A673 (cell line): ENCODE measurements at regions of chr2 and their contacts with region 1.

Region 1: GRCh38 chr2:137050949-137051348 is 285.6 kb downstream of the THSD7B start:
- DNase-seq: no peak
- H3K4me3 ChIP-seq: no peak overlapping the region
- H3K27ac ChIP-seq: no peak overlapping the region
- H3K4me1 ChIP-seq: no peaks in the 10 kb centered on the region
- H3K27me3 ChIP-seq: no peaks in the 10 kb centered on the region
- CTCF ChIP-seq: 0 out of 2 replicates have a peak, but pooled peaks have one; percentile 13

Region 2: DNA sequence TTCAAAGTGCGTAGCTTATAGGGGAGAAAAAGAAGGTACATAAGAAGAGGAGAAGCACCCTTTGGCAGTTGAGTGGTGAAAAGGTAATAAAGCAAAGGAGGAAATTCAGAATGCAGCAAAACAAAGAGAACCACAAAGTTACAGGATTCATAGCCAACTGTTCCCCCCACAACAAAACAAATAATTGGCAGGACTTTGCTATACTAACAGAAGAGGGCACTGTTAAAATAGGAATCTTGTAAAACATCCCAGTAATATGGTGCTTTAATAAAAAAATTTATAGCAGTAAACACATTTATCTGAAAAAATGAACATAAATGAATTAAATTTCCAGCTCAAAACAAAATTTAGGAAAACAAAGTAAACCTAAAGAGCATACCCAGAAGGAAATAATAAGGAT is 1477.3 kb before region 1 on chr2:
- CTCF ChIA-PET with region 1: no interaction called
- POLR2A ChIA-PET with region 1: no interaction called
- intact Hi-C with region 1: no loop called
- DNase-seq: no peak
- H3K4me3 ChIP-seq: no peak overlapping the region
- H3K27ac ChIP-seq: no peak overlapping the region
- H3K4me1 ChIP-seq: no peaks in the 10 kb centered on the region
- H3K27me3 ChIP-seq: no peaks in the 10 kb centered on the region
- CTCF ChIP-seq: peak; percentile 33; the same call in 1 of the 2 replicates

Region 3: GRCh38 chr2:136874258-136874657 is 176.7 kb before region 1 on chr2:
- CTCF ChIA-PET with region 1: no interaction called
- POLR2A ChIA-PET with region 1: no interaction called
- intact Hi-C with region 1: loop called (anchors 10 kb)
- DNase-seq: peak; percentile 45
- H3K4me3 ChIP-seq: no peak overlapping the region
- H3K27ac ChIP-seq: no peak overlapping the region
- H3K4me1 ChIP-seq: no peaks in the 10 kb centered on the region
- H3K27me3 ChIP-seq: no peaks in the 10 kb centered on the region
- CTCF ChIP-seq: peak; percentile 67